ENCODE measurements at regions of chr5 and their contacts with region 1.

Region 1: DNA sequence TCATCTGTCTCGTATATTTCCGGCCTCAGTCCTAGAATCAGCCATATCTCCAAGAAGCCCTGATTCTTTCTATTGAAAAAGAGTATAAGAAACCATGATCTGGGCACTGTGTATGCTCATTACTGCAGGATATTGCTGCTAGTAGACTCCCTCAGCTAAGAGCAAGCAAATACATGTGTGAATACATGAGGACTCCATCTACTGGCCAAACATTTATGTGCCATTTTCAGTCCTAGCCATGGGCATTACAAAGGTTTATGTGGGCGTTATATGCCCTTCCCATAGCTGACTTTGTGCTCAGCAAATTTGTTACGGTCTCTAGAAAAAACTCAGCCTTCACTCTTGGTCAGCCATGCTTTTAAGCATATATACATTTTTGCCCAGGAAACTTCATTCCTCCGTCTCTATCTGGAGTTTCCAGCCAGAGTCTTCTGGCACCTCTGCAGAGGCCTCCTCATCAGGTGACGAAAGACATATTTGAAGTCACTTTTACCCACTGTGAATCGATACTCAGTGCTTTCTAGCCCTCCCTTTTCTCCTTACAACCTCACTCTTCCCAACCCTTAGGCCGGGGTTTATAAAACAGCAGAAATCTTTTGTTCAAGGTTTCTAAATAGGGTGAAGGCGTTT is 1495.6 kb upstream of the CDH6 start:
- DNase-seq: no peak

Region 2: GRCh38 chr5:29367176-29367833 is 330.6 kb before region 1 on chr5:
- intact Hi-C with region 1: loop called (anchors 2 kb)
- DNase-seq: no peak

Region 3: DNA sequence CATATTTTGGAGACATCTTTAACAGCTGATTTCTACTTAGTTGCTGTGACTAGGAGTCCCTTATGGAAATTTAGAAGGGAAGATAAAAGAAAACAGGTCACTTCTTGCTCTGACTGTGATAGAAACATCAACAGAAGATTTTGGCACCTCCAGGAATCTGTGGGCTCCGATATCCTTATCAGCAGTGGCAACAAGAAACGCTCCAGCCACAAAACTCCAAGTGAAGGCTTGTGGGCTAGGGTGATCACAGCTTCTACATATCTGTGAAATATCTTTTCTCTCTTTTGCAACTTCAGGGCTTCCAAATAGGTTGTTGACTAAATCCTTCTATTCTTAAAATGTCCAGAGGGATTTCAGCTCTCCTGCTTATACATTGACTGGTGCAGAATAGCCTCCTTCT is 129.9 kb before region 1 on chr5:
- intact Hi-C with region 1: no loop called
- DNase-seq: peak in 1 of 10 donors; percentile 8

Region 4: DNA sequence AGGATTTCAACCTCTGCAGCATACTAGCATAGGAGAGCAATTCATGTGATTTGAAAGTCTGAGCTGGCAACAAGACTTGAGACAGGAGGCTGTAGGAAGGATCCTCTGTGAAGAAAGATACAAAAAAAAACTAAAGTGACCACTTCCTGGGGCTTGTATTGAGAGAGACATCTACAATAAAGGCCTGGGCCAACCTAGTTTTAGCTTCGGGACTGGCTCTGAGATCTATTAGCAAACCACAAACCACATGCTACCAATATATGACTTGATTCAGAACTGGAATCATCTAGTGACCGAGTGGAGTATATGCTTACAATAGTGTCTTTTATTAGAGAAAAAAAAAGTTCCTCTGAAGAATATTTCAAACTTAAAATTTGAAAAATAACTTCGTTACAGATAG is 46.7 kb after region 1 on chr5:
- intact Hi-C with region 1: no loop called
- DNase-seq: no peak

Region 5: GRCh38 chr5:29930316-29930715 is 232.4 kb after region 1 on chr5:
- intact Hi-C with region 1: no loop called
- DNase-seq: no peak

Measured in posterior cingulate gyrus (tissue), 11 donors.